Activated T-helper 1 cell treated with anti-CD3 and anti-CD28 coated beads, Interleukin-12 subunit alpha, Interleukin-12 subunit beta, Interleukin-2, Interleukin-4 antibody, amounts not matched to agents 30 ng/mL and 10 ng/mL and 1 ng/mL, durations not matched to agents 14 hours and 24 hours and 36 hours (primary cell): ENCODE measurements at regions of chr7 and their contacts with region 1.

Region 1: GRCh38 chr7:76179686-76180085 is 22.0 kb upstream of the SRRM3 start:
- DNase-seq: no peak
- H3K4me3 Mint-ChIP-seq: no peak overlapping the region
- H3K27ac Mint-ChIP-seq: no peak overlapping the region
- H3K4me1 Mint-ChIP-seq: peaks cover 6% of the 10 kb centered on the region
- H3K27me3 Mint-ChIP-seq: no peaks in the 10 kb centered on the region

Region 2: GRCh38 chr7:76149847-76150691 is 29.6 kb before region 1 on chr7:
- intact Hi-C with region 1: no loop called
- DNase-seq: no peak
- H3K4me3 Mint-ChIP-seq: no peak overlapping the region
- H3K27ac Mint-ChIP-seq: no peak overlapping the region
- H3K4me1 Mint-ChIP-seq: peaks cover 24% of the 10 kb centered on the region
- H3K27me3 Mint-ChIP-seq: no peaks in the 10 kb centered on the region

Region 3: GRCh38 chr7:76166404-76167255 is 13.1 kb before region 1 on chr7:
- intact Hi-C with region 1: loop called (anchors 1 kb)
- DNase-seq: peak; percentile 93
- H3K4me3 Mint-ChIP-seq: peak overlapping the region; percentile 85
- H3K27ac Mint-ChIP-seq: peak overlapping the region; percentile 85
- H3K4me1 Mint-ChIP-seq: peaks cover 10% of the 10 kb centered on the region
- H3K27me3 Mint-ChIP-seq: peaks cover 2% of the 10 kb centered on the region

Region 4: DNA sequence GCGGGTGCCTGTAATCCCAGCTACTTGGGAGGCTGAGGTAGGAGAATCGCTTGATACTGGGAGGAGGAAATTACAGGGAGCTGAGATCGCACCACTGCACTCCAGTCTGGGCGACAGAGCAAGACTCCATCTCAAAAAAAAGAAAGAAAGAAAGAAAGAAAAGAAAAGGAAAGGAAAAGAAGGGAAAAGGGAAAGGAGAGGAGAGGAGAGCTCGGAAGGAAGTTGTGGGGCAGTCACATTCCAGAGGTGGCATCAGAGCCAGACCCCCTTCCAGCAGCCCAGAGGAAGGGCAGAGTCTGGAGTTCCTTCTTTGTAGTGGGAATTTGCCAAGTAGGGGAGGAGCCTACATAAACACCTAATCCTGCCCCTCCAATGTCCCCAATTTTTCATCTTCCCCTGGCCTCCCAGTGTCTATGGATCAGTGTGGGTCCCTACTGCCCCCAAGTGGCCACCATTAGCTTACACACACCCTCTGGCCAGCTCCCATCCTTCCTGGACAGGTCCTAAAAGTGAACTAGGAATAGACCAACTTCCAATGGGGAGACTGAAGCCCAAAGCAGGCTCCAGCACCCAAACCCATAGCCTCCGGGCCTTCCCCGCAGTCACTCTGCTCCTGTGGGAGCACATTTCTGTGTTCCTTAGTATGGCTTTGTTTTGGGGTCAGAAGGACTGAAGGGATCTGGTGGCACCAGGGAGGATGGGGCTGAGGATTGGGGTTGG is 83.2 kb after region 1 on chr7:
- intact Hi-C with region 1: loop called (anchors 1 kb)
- DNase-seq: no peak
- H3K4me3 Mint-ChIP-seq: no peak overlapping the region
- H3K27ac Mint-ChIP-seq: no peak overlapping the region
- H3K4me1 Mint-ChIP-seq: peaks cover 7% of the 10 kb centered on the region
- H3K27me3 Mint-ChIP-seq: peaks cover 30% of the 10 kb centered on the region

Region 5: GRCh38 chr7:76291343-76292212 is 111.9 kb after region 1 on chr7:
- intact Hi-C with region 1: loop called (anchors 1 kb)
- DNase-seq: peak; percentile 84
- H3K4me3 Mint-ChIP-seq: peak overlapping the region; percentile 43
- H3K27ac Mint-ChIP-seq: peak overlapping the region; percentile 64
- H3K4me1 Mint-ChIP-seq: peaks cover 13% of the 10 kb centered on the region
- H3K27me3 Mint-ChIP-seq: peaks cover 11% of the 10 kb centered on the region